Left cardiac atrium (tissue), 4 donors: ENCODE measurements at regions of chr11 and their contacts with region 1.

Region 1: DNA sequence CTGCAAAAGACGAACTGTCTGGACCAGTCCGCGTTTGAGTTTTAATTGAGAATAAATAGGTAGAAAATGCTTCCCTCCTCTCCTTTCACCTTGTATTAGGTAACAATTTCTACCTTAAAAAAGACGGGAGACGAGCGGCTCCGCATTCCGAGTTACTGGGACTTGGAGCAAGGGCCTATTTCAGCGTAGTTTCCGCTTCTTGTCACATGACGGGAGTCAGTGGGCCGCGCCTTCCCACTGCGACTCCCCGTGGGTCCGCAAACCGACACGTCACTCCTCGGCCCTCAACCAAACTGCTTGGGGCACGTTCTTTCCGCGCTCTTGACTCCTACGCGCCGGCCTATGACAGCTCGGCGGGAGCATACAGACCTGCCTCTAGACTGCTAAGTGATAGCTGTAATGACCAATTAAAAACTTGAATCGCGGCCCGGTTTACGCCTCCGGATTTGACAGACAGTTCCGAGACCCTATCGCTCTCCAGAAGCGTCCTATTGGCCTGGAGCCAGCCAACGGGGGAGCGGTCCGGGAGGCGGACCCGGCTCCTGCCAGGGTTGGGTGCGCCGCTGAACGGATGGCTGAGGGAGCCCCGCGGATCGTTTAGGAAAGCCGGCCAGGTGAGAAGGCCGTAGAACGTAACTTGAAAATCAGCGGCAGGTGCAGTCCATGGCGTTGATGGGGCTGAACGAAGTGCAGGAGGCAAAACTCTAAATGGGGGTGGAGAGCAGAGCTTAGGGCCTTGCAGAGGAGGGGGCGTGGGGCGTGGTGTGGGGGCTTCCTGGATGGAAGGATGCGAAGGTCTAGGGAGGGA is at the start of gene STT3A:
- DNase-seq: peak; percentile 100
- ATAC-seq: peak; percentile 98
- total RNA-seq, gene STT3A: 84.1 to 90.3 TPM

Region 2: GRCh38 chr11:125605417-125605816 is 12.9 kb after region 1 on chr11:
- intact Hi-C with region 1: no loop called
- DNase-seq: no peak
- ATAC-seq: no peak

Region 3: DNA sequence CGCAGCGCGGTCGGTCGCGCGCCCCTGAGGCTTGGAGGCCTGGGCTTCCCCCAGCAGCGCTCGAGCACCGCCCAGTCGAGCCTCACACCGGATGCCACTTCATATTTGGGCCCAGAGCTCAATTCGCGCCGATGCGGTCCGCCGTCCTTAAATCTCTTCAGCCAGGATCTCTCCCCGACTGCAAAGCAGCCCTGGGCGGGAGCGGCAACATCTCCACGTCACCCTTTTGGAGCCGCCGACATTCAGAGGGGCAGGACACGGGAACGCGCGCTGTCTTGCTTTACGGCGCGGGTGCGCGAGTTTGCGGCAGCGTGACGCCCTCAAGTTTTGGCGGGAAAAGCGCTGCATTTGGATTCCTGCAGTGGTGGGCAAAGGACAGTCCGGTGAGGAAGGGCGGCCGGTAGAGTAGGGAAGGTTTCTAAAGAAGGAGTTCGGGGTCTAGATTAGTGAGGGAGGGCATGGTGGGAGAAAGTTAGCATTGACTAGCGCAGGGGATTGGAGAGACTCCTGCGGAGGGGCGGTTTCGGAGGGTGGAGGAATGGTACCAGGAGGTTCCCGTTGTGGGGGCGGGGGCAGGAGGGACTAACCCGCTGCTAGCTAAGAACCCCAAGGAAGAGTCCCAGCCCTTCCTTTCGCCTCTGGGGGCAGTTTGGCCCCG is 33.2 kb after region 1 on chr11:
- intact Hi-C with region 1: loop called in 1 of 2 experiments (anchors 2 kb)
- DNase-seq: peak; percentile 89
- ATAC-seq: peak; percentile 95 to 97